Common myeloid progenitor, CD34-positive (primary cell): ENCODE measurements at regions of chr19 and their contacts with region 1.

Region 1: GRCh38 chr19:46728693-46729676 is 12.1 kb upstream of the PRKD2 start:
- DNase-seq: peak; percentile 58 to 77 (median 75)
- H3K4me3 ChIP-seq: peak overlapping the region in 3 of 7 experiments; percentile 19 to 53 (median 23)
- H3K27ac ChIP-seq: no peak overlapping the region
- H3K4me1 ChIP-seq: peaks cover 1 to 60% (median 46%) of the 10 kb centered on the region in 4 experiments
- H3K27me3 ChIP-seq: no peaks in the 10 kb centered on the region

Region 2: DNA sequence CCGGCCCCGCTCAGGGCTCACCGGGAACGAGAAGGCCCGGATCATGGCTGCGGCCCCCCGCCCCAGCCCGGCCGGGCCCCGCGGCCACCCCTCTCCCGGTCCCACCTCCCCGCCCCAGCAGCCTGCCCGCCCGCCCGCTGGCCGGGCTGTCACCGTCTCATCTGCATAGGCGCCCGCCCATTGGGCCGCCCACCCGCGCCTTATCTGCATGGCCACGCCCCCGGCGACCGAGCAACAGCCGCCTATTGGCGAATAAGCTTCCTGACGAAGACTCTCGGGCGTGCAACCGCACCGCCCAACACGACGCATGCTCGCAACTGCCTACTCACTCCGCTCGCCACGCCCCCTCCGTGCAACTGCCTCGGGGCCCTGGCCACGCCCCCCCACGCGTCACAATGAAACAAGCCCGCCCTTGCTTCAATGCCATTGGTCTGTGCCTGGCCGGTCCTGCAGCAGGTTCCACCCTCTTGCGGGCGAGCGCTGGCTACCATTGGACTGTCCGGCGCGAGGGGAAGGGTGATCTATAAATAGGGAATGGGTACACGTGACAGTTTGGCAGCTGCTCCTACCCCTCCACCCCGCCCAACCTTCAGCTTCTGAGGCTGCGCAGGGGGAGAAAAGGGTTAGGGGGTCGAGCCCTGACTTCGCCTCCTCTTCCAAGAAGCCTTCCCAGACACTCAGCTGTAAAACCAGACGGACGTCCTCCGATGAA is 67.8 kb before region 1 on chr19 and contains the start of gene DACT3:
- CTCF ChIA-PET with region 1: no interaction called
- POLR2A ChIA-PET with region 1: no interaction called
- DNase-seq: peak; percentile 99 to 100 (median 100)
- H3K4me3 ChIP-seq: peak within 1 kb of the TSS in 6 of 7 experiments; percentile 9 to 69 (median 56)
- H3K27ac ChIP-seq: peak within 1 kb of the TSS in 1 of 2 experiments; percentile 25
- H3K4me1 ChIP-seq: peaks cover 0 to 31% (median 27%) of the 10 kb centered on the region in 4 experiments
- H3K27me3 ChIP-seq: peaks cover 0 to 33% (median 20%) of the 10 kb centered on the region in 5 experiments

Region 3: GRCh38 chr19:46697204-46697960 is 31.6 kb before region 1 on chr19:
- CTCF ChIA-PET with region 1: interaction called, 356 read pairs
- POLR2A ChIA-PET with region 1: interaction called, 3 read pairs
- DNase-seq: peak in 2 of 3 donors; percentile 49 to 60
- H3K4me3 ChIP-seq: no peak overlapping the region
- H3K27ac ChIP-seq: peak overlapping the region in 1 of 2 experiments; percentile 43
- H3K4me1 ChIP-seq: no peaks in the 10 kb centered on the region
- H3K27me3 ChIP-seq: no peaks in the 10 kb centered on the region

Region 4: DNA sequence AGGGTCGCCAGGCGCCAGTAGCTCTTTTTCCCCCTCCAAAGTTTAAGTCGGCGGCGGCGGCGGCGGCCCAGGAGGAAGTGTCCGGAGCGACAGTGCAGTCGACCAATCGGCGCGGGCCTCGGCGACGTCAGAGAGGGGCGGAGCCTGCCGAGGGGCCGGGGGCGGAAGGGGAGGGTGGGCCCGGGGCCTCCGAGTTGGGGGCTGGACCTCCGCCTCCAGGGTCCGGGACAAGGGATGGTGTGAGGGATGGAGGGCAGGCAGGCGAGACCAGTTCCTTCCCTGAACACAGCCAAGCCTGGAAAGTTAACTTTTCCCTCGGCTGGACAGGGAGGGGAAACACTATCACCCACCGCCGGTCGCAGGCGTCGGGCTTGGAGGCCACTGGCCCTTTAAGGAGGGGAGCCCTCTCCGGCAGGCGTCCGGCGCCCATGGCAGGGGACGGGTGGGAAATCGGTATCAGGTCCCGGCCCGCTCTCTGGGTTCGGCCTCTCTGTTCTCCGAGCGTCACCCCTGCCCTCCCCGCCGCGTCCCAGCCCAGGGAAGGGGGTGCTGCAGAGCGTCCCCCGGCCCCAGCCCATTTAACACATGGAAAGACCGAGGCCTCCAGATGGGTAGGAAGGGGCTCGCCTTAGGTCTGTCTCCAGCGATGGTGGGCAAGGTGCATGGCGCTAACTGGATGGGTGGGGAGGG is 11.8 kb before region 1 on chr19 and contains the start of gene PRKD2:
- CTCF ChIA-PET with region 1: interaction called, 356 read pairs
- POLR2A ChIA-PET with region 1: interaction called, 15 read pairs
- DNase-seq: peak; percentile 74 to 84 (median 81)
- H3K4me3 ChIP-seq: peak within 1 kb of the TSS; percentile 67 to 96 (median 84)
- H3K27ac ChIP-seq: peak within 1 kb of the TSS; percentile 64 to 89
- H3K4me1 ChIP-seq: peaks cover 17 to 82% (median 68%) of the 10 kb centered on the region in 4 experiments
- H3K27me3 ChIP-seq: no peaks in the 10 kb centered on the region

Region 5: GRCh38 chr19:46739290-46739771 is 10.3 kb after region 1 on chr19:
- CTCF ChIA-PET with region 1: interaction called, 14 read pairs
- POLR2A ChIA-PET with region 1: interaction called, 3 read pairs
- DNase-seq: no peak
- H3K4me3 ChIP-seq: no peak overlapping the region
- H3K27ac ChIP-seq: peak overlapping the region in 1 of 2 experiments; percentile 22
- H3K4me1 ChIP-seq: peaks cover 0 to 13% (median 4%) of the 10 kb centered on the region in 4 experiments
- H3K27me3 ChIP-seq: no peaks in the 10 kb centered on the region

Region 6: GRCh38 chr19:46753420-46754155 is 24.6 kb after region 1 on chr19:
- CTCF ChIA-PET with region 1: interaction called, 14 read pairs
- POLR2A ChIA-PET with region 1: no interaction called
- DNase-seq: peak; percentile 53 to 80 (median 79)
- H3K4me3 ChIP-seq: no peak overlapping the region
- H3K27ac ChIP-seq: no peak overlapping the region
- H3K4me1 ChIP-seq: peaks cover 0 to 15% (median 8%) of the 10 kb centered on the region in 4 experiments
- H3K27me3 ChIP-seq: no peaks in the 10 kb centered on the region